Sigmoid colon (tissue), 7 donors: ENCODE measurements at regions of chr17 and their contacts with region 1.

Region 1: DNA sequence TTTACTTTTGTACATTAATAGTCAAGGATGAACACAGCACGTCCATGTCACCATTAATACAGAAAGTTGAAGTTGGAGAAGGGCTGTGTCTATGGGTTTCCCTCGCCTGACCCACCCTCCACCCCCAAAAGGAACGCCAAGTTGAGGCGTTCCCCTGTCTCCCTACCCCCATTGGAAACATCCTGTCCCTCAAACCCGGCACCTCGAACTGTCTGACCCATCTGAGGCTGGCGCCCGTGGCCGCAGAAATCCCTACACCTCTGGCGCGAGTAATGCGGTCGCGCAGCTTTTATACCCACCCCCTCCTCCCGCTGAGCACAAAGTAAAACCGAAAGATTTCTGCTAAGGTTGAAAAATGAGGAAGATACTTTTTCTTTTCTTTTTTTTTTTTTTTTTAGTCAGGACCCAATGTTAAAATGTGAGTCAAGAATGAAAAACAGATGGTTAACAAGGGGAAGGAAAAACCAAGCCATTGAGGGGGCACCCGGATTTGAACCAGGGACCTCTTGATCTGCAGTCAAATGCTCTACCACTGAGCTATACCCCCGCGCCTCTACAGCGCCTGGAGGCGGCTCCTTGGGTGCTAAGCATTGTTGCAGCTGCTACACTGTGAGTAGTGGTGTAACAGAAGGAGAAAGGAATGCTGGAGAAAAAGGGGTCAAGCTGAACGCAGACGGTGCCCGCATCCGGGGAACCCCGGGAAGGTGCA is 887 bp upstream of the LASP1 start:
- DNase-seq: peak; percentile 97
- H3K4me3 ChIP-seq: peak overlapping the region; percentile 71 to 95 (median 91)
- H3K27ac ChIP-seq: peak overlapping the region; percentile 95 to 99 (median 97)
- H3K4me1 ChIP-seq: peaks cover 0 to 51% (median 34%) of the 10 kb centered on the region in 4 donors
- H3K27me3 ChIP-seq: no peaks in the 10 kb centered on the region
- CTCF ChIP-seq: no peak
- EP300 ChIP-seq: no peak
- POLR2A ChIP-seq: no peak

Region 2: DNA sequence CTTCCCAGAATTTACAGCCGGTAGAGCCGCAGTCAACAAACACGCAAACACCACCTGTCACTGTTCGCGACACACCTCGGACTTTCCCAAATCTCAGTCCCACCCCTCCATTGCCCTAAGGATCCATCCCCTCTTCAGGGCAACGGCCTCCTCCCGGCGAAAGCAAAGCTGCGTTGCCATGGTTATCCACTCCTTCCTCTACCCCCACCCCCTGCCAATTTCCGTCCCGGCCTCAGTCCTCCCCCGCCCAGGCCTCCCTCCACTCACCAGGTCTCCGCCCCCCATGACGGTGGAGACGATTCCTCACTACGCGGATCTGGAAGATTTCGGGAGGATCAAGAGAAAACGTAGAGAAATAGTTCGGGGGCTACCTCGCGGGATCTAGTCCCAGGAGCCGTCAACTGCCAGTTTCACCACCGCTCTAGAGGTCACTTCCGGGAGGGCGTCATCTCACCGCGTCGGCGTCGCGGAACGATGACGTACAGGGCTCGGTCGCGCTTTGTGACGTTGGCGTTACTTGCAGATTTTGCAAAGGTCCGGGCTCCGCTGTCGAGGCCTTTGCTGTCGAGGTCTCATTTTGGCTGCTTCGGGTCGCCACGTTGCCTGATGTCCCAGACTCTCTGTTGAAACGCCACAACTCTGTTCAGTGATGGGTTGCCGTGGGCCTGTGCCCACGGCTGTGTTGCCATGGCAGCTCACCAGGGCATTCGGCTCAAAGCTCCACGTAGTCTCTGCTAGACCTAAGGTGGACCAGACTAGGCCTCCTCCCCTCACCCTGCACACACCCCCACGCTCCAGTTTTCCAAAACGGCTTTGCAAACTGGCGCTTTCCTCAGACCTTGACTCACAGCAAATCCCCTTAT is 43.8 kb before region 1 on chr17 and contains the start of gene CWC25:
- intact Hi-C with region 1: loop called (anchors 1 kb)
- DNase-seq: peak; percentile 97
- H3K4me3 ChIP-seq: peak within 1 kb of the TSS; percentile 73 to 86 (median 84)
- H3K27ac ChIP-seq: peak within 1 kb of the TSS; percentile 94 to 99 (median 96)
- H3K4me1 ChIP-seq: peaks cover 0 to 33% (median 25%) of the 10 kb centered on the region in 4 donors
- H3K27me3 ChIP-seq: no peaks in the 10 kb centered on the region
- CTCF ChIP-seq: no peak
- EP300 ChIP-seq: peak in 2 of 4 donors; percentile 81 to 87
- POLR2A ChIP-seq: peak; percentile 84 to 88
- total RNA-seq, gene CWC25: 15.6 to 32.4 (median 17.3) TPM

Region 3: DNA sequence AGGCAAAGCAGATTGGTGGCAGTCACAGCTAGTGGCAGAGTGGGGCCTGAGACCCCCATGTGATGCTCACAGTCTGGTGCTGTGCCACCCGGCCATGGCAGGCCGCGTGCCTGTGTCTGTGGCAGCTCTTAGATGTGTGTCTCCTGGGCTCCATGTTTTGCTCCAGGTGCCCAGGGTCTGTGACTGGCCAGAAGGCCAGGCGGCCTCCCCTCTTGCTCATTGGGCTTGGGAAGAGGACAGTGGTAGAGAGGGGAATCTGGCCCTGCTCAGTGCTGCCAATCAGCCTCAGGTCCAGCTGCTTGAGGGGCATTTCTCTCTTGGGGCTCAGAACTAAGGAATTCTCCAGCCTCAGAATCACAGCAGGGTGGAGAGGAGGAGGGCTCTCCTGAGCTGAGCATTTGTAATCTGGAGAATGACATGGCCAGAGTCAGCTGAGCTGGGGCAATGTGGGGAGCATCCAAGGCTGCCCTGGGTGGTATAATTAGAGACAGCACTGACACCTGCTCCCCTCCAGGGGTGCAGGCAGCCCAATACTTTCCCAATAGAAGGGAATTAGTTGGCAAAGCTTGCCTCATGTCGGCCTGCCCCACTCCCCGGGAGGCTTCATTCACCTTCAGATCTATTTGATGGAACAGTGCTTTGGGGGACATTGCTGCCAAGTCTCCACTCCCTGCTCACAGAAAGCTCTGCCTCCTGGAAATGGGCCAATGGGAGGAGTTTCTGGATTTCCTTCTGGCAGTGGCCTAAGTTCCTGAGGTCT is 53.7 kb after region 1 on chr17:
- intact Hi-C with region 1: loop called (anchors 5 kb)
- DNase-seq: peak; percentile 92
- H3K4me3 ChIP-seq: no peak overlapping the region
- H3K27ac ChIP-seq: peak overlapping the region; percentile 64 to 86 (median 76)
- H3K4me1 ChIP-seq: peaks cover 0 to 60% (median 46%) of the 10 kb centered on the region in 4 donors
- H3K27me3 ChIP-seq: no peaks in the 10 kb centered on the region
- CTCF ChIP-seq: no peak
- EP300 ChIP-seq: no peak
- POLR2A ChIP-seq: no peak

Region 4: DNA sequence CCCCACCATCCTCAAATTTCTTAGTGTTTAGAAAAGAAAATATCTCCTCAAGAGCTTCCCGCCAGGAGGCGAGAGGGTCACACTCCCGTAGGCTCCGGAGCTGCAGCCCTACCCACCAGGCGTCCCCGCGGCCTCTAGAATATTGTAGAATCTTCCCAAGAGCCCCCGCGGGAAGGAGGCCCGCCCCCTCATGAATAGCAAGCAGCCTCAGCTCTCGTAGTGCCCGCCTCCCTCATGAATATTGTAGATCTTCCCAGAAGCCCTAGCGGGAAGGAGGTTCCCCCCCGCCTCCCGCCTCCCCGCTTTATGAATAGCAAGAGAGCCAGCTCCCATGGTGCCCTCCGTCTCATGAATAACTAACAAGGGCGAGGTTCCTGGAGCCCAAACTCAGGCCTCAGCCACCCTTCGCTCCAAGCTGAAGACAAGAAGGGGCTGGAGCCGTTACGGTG is 98.3 kb after region 1 on chr17 and contains the start of gene FBXO47:
- intact Hi-C with region 1: loop called (anchors 5 kb)
- DNase-seq: peak; percentile 97
- H3K4me3 ChIP-seq: peak within 1 kb of the TSS in 3 of 4 donors; percentile 17 to 39 (median 34)
- H3K27ac ChIP-seq: peak within 1 kb of the TSS; percentile 62 to 69 (median 68)
- H3K4me1 ChIP-seq: peaks cover 0 to 5% (median 4%) of the 10 kb centered on the region in 4 donors
- H3K27me3 ChIP-seq: no peaks in the 10 kb centered on the region
- CTCF ChIP-seq: peak in 1 of 4 experiments; percentile 10
- EP300 ChIP-seq: no peak
- POLR2A ChIP-seq: peak; percentile 14 to 24
- total RNA-seq, gene FBXO47: not detected

Region 5: GRCh38 chr17:39115135-39115534 is 246.2 kb after region 1 on chr17:
- intact Hi-C with region 1: no loop called
- DNase-seq: no peak
- H3K4me3 ChIP-seq: peak overlapping the region in 1 of 4 donors; percentile 13
- H3K27ac ChIP-seq: peak overlapping the region; percentile 33 to 76 (median 54)
- H3K4me1 ChIP-seq: peaks cover 0 to 14% (median 13%) of the 10 kb centered on the region in 4 donors
- H3K27me3 ChIP-seq: no peaks in the 10 kb centered on the region
- CTCF ChIP-seq: no peak
- EP300 ChIP-seq: no peak
- POLR2A ChIP-seq: no peak

Region 6: GRCh38 chr17:39153599-39154051 is 284.7 kb after region 1 on chr17:
- intact Hi-C with region 1: loop called (anchors 5 kb)
- DNase-seq: peak; percentile 97
- H3K4me3 ChIP-seq: peak overlapping the region; percentile 64 to 88 (median 74)
- H3K27ac ChIP-seq: peak overlapping the region; percentile 89 to 96 (median 90)
- H3K4me1 ChIP-seq: peaks cover 0 to 28% (median 24%) of the 10 kb centered on the region in 4 donors
- H3K27me3 ChIP-seq: peaks cover 14 to 21% (median 15%) of the 10 kb centered on the region in 3 donors
- CTCF ChIP-seq: peak in 2 of 4 experiments; percentile 17 to 24
- EP300 ChIP-seq: no peak
- POLR2A ChIP-seq: no peak